Caco-2 (cell line): ENCODE measurements at regions of chr3 and their contacts with region 1.

Region 1: GRCh38 chr3:195558602-195559001 is 15.5 kb upstream of the PPP1R2 start:
- DNase-seq: peak; percentile 70 to 71
- H3K4me3 ChIP-seq: no peak overlapping the region
- H3K4me3 Mint-ChIP-seq: no peak overlapping the region
- H3K27ac Mint-ChIP-seq: no peak overlapping the region
- H3K4me1 ChIP-seq: peaks cover 28% of the 10 kb centered on the region
- H3K4me1 Mint-ChIP-seq: peaks cover 13% of the 10 kb centered on the region
- H3K27me3 ChIP-seq: no peaks in the 10 kb centered on the region
- H3K27me3 Mint-ChIP-seq: no peaks in the 10 kb centered on the region
- CTCF ChIP-seq: peak; percentile 48 to 71

Region 2: GRCh38 chr3:195850857-195851543 is 292.4 kb after region 1 on chr3:
- CTCF ChIA-PET with region 1: no interaction called
- POLR2A ChIA-PET with region 1: no interaction called
- intact Hi-C with region 1: loop called (anchors 1 kb)
- DNase-seq: peak; percentile 88
- H3K4me3 ChIP-seq: no peak overlapping the region
- H3K4me3 Mint-ChIP-seq: no peak overlapping the region
- H3K27ac Mint-ChIP-seq: no peak overlapping the region
- H3K4me1 ChIP-seq: peaks cover 13% of the 10 kb centered on the region; the same call in 1 of the 2 replicates
- H3K4me1 Mint-ChIP-seq: no peaks in the 10 kb centered on the region
- H3K27me3 ChIP-seq: no peaks in the 10 kb centered on the region
- H3K27me3 Mint-ChIP-seq: no peaks in the 10 kb centered on the region
- CTCF ChIP-seq: peak; percentile 99 to 100